Right ventricle myocardium inferior (tissue), 1 donor: ENCODE measurements at regions of chr9 and their contacts with region 1.

Region 1: DNA sequence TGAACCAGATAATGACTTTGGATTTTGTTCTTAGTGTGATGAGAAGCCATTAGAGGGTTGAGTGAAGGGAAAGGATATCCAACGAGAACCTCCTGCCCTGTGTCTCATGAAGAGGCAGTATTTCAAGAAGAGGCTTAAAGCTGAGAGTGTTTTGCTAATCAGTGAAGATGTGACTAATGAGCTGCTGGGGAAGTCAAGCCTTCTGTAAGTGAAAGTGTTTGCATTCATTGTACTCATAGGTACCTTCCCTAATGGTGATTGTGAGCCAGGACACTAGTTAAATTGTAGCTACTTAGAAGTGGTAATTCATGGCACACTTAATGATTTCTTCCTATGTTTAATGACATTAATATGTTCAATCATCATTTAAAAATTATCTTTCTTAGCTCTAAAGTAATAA is 23.7 kb downstream of the PIP5K1B start:
- DNase-seq: no peak
- ATAC-seq: no peak

Region 2: GRCh38 chr9:68669218-68669617 is 59.5 kb before region 1 on chr9:
- intact Hi-C with region 1: loop called (anchors 10 kb)
- DNase-seq: no peak
- ATAC-seq: no peak